Aorta (tissue), 5 donors: ENCODE measurements at regions of chr17 and their contacts with region 1.

Region 1: DNA sequence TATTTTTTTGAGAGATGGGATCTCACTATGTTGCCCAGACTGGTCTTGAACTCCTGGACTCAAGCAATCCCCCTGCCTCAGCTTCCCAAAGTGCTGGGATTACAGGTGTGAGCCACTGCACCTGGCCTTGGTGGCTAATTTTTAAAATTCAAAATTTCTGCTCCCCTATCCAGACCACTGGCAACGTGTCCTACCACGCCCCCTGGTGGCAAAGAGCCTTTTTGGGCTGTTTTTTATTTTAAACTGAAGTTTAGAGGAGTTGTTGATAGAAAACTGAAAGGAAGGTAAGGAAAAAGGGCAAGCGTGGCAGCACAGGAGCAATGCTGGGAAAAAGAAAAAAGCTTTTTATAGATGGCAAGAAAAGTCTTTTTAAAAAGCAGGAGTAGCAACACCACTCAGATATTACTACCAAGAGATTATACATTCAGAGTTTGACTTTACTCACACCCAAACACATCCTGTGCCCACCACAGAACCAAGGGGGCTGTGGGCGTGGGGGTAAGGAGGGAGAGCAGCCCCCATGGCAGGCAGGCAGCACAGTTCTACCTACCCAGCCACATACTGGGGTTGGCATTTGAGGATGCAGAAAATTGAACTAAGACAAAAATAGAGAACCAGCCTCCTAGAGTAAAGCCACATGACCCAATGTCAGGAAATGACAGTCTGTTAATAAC is 4.2 kb upstream of the MXRA7 start:
- DNase-seq: peak; percentile 82 to 91
- ATAC-seq: peak; percentile 47
- H3K4me3 ChIP-seq: no peak overlapping the region
- H3K27ac ChIP-seq: no peak overlapping the region
- H3K4me1 ChIP-seq: no peaks in the 10 kb centered on the region
- H3K27me3 ChIP-seq: no peaks in the 10 kb centered on the region

Region 2: GRCh38 chr17:76557368-76558197 is 157.4 kb before region 1 on chr17:
- intact Hi-C with region 1: loop called (anchors 2 to 10 kb)
- DNase-seq: peak; percentile 97
- ATAC-seq: peak; percentile 98
- H3K4me3 ChIP-seq: peak overlapping the region; percentile 69 to 91
- H3K27ac ChIP-seq: peak overlapping the region in 1 of 2 donors; percentile 84
- H3K4me1 ChIP-seq: no peaks in the 10 kb centered on the region
- H3K27me3 ChIP-seq: no peaks in the 10 kb centered on the region

Region 3: DNA sequence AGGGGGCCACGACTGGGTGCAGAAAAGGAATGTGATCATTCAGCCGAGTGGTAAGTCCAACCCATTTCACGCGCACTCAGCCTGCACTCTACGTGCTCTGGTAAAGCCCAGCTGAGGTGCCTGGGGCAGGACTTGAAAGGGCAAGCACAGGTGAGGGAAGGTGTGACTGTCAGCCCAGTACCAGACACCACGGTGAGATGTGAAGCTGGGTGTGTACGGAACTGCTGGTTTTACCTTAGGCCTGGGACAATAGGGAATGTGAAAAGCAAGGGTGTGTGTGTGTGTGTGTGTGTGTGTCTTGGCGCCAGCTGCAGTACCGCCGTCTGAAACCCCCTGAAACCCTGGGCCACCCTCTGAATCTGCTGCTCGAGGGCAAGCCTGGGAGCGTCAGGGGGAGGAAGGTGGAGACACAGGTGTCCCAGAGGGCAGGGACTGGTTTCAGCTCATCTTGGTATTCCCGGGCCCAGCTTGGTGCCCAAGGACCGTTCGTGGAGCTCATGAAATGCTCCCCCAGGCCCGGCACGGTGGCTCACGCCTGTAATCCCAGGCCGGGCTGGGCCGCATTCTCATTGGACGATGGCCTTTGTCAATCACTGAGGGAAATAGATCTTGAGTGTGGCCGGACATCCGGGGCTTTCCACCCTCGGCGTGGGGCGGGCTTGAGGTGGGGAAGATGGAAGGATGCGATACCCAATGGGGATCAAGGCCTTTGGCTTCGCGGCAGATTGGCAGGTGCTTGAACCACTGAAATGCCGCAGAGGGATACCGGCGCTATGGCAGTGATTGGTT is 43.6 kb before region 1 on chr17:
- intact Hi-C with region 1: loop called (anchors 5 kb)
- DNase-seq: peak; percentile 99 to 100
- ATAC-seq: peak; percentile 99
- H3K4me3 ChIP-seq: no peak overlapping the region
- H3K27ac ChIP-seq: peak overlapping the region in 1 of 2 donors; percentile 7
- H3K4me1 ChIP-seq: no peaks in the 10 kb centered on the region
- H3K27me3 ChIP-seq: no peaks in the 10 kb centered on the region

Region 4: GRCh38 chr17:76687308-76688164 is 27.4 kb before region 1 on chr17:
- intact Hi-C with region 1: loop called in 1 of 2 experiments (anchors 2 kb)
- DNase-seq: peak; percentile 83 to 84
- ATAC-seq: peak; percentile 81
- H3K4me3 ChIP-seq: no peak overlapping the region
- H3K27ac ChIP-seq: peak overlapping the region; percentile 56 to 62
- H3K4me1 ChIP-seq: no peaks in the 10 kb centered on the region
- H3K27me3 ChIP-seq: no peaks in the 10 kb centered on the region